IMR-90 (cell line): ENCODE measurements at regions of chr4 and their contacts with region 1.

Region 1: DNA sequence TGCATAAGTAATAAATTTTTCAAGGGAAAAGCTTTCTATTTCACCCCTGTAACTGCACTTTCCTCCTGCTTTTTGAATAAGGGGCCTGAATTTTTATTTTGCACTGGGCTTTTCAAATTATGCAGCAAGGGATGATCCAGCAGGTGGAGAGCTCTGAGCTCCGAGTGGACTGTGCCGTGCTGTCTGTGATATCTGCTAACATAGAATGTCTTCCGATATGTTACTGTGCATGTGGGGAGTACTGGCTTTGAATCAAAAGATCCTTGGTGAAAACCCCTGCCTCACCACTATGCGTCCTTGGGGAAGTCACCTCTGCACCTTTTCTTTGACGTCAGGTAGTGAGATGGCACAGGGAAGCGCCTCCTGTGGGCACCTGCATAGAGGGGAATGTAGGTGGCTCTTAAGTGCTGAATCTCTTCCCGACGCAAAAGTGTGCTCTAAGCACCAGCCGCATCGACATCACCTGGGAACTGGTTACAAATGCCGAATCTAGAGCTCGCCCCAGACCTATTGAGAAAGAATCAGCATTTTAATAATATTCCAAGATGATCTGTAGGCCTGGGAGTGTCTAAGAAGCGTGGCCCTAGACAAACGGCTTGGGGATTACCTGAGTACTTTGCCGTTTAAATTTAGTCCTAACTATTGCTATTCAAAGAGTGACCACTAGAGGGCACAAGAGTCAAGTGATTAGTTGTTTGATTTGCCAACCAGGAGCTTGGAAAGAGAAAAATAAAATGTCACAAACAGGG is 19.2 kb upstream of the WFS1 start:
- DNase-seq: peak; percentile 59
- ATAC-seq: peak; percentile 83
- H3K4me3 ChIP-seq: no peak overlapping the region
- H3K27ac ChIP-seq: no peak overlapping the region
- H3K4me1 ChIP-seq: no peaks in the 10 kb centered on the region
- H3K27me3 ChIP-seq: peaks cover 38% of the 10 kb centered on the region
- CTCF ChIP-seq: peak; percentile 85
- POLR2A ChIP-seq: 0 out of 2 replicates have a peak, but pooled peaks have one; percentile 32
- RAD21 ChIP-seq: peak; percentile 88

Region 2: GRCh38 chr4:6264225-6264540 is 13.8 kb after region 1 on chr4:
- CTCF ChIA-PET with region 1: interaction called, 12 read pairs
- POLR2A ChIA-PET with region 1: interaction called, 5 read pairs
- dilution Hi-C with region 1: no loop called
- in situ Hi-C with region 1: no loop called
- intact Hi-C with region 1: no loop called
- DNase-seq: peak; percentile 63
- ATAC-seq: peak; percentile 94
- H3K4me3 ChIP-seq: no peak overlapping the region
- H3K27ac ChIP-seq: no peak overlapping the region
- H3K4me1 ChIP-seq: no peaks in the 10 kb centered on the region
- H3K27me3 ChIP-seq: peaks cover 6% of the 10 kb centered on the region; the same call in 1 of the 2 replicates
- CTCF ChIP-seq: peak; percentile 80
- POLR2A ChIP-seq: no peak
- RAD21 ChIP-seq: peak; percentile 87

Region 3: DNA sequence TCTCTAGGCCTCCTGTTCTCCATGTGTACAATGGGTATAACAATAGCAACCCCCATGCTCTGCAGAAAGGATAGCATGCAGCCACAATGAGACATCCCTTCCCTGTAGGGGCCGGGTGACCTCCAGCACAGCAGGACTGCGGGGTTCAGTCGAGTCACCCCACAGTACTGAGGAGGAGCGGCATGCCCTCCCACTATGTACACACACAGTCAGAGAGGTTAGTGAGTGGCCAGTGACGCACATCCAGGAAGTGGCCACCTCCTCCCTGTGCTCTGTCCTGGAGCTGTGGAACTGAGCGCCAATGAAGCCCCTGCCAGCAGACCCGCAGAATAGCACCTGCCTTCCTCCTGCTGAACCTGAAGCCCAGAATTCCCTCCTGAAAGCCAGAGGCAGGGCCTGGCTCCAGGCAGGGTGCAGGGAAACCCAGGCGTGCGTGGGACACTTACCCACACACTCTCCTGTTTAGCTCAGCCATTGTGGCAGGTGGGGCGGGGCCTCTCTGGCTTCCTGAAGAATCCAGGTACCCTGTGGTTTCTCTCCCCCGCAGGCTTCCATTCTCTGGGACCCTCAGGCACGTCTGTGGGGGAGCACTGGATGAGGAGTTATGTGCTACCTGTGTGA is 69.2 kb after region 1 on chr4:
- CTCF ChIA-PET with region 1: interaction called, 20 read pairs
- POLR2A ChIA-PET with region 1: no interaction called
- dilution Hi-C with region 1: no loop called
- in situ Hi-C with region 1: no loop called
- intact Hi-C with region 1: no loop called
- DNase-seq: no peak
- ATAC-seq: no peak
- H3K4me3 ChIP-seq: no peak overlapping the region
- H3K27ac ChIP-seq: no peak overlapping the region
- H3K4me1 ChIP-seq: no peaks in the 10 kb centered on the region
- H3K27me3 ChIP-seq: peaks cover 21% of the 10 kb centered on the region
- CTCF ChIP-seq: no peak
- POLR2A ChIP-seq: no peak
- RAD21 ChIP-seq: no peak

Region 4: GRCh38 chr4:6546681-6547447 is 296.5 kb after region 1 on chr4:
- CTCF ChIA-PET with region 1: interaction called, 8 read pairs
- POLR2A ChIA-PET with region 1: no interaction called
- dilution Hi-C with region 1: no loop called
- in situ Hi-C with region 1: loop called (anchors 10 kb)
- intact Hi-C with region 1: loop called (anchors 1 kb)
- DNase-seq: peak; percentile 72
- ATAC-seq: peak; percentile 93
- H3K4me3 ChIP-seq: no peak overlapping the region
- H3K27ac ChIP-seq: no peak overlapping the region
- H3K4me1 ChIP-seq: no peaks in the 10 kb centered on the region
- H3K27me3 ChIP-seq: peaks cover 3% of the 10 kb centered on the region; the same call in 1 of the 2 replicates
- CTCF ChIP-seq: peak; percentile 86
- POLR2A ChIP-seq: no peak
- RAD21 ChIP-seq: peak; percentile 55